PC-9 (cell line): ENCODE measurements at regions of chr3 and their contacts with region 1.

Region 1: GRCh38 chr3:119098619-119099222 is 47.2 kb upstream of the TEX55 start:
- DNase-seq: peak in 1 of 2 experiments; percentile 14
- H3K4me3 ChIP-seq: no peak overlapping the region
- H3K27ac ChIP-seq: no peak overlapping the region
- H3K4me1 ChIP-seq: no peaks in the 10 kb centered on the region
- H3K27me3 ChIP-seq: no peaks in the 10 kb centered on the region
- CTCF ChIP-seq: peak; percentile 83

Region 2: DNA sequence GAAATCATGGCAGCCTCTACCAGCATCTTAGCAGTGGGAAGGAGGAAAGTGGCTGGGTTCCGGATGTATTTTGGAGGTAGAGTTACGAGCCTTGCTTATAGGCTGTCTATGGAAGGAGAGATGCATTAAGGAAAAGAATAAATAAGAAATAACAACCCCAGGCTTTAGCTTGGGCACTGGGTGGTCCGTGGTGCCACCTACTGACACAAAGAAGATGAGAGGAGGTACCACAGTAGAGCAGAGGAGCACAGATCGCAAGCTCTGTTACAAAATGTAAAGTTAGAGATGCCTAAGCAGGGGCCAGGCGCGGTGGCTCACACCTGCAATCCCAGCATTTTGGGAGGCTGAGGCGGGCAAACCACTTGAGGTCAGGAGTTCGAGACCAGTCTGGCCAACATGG is 289.9 kb after region 1 on chr3:
- CTCF ChIA-PET with region 1: no interaction called
- POLR2A ChIA-PET with region 1: no interaction called
- intact Hi-C with region 1: loop called (anchors 2 kb)
- DNase-seq: peak in 1 of 2 experiments; percentile 59
- H3K4me3 ChIP-seq: no peak overlapping the region
- H3K27ac ChIP-seq: no peak overlapping the region
- H3K4me1 ChIP-seq: no peaks in the 10 kb centered on the region
- H3K27me3 ChIP-seq: no peaks in the 10 kb centered on the region
- CTCF ChIP-seq: peak; percentile 69

Region 3: DNA sequence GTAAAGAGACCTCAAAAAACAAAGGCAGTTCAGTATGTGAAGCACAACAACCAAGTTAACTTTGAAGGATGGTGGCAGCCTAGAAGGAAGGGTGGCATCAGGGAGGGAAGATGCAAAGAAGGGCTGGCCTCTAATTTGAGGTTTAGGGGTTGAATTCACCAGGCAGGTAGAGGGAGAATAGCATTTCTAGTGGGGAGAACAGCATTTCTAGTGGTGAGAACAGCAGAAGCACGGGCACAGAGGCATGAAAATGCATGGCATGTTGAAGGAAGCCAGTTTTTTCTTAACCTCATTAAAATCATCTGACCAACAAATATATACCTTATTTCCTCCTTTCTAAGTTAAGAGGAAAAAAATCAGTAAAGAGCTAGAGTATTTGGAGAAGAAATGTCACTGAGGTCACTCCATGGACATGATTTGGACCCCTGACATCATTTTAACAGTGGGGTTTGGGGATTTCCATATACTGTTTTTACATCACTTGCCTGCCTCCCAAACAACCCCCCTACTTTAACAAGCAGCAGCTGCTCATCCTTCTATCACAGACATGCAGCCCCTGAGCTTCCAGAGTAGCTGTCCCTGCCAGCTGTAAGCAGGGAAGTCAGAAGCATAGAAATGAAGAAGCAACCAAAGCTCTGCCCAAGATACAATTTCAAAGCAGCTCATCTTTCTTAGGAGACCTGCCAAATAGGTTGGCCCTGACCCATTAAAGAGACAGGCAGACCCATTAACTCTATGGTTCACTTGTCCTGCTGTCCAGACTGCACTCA is 564.1 kb after region 1 on chr3:
- CTCF ChIA-PET with region 1: no interaction called
- POLR2A ChIA-PET with region 1: no interaction called
- intact Hi-C with region 1: no loop called
- DNase-seq: no peak
- H3K4me3 ChIP-seq: no peak overlapping the region
- H3K27ac ChIP-seq: no peak overlapping the region
- H3K4me1 ChIP-seq: no peaks in the 10 kb centered on the region
- H3K27me3 ChIP-seq: no peaks in the 10 kb centered on the region
- CTCF ChIP-seq: no peak

Region 4: DNA sequence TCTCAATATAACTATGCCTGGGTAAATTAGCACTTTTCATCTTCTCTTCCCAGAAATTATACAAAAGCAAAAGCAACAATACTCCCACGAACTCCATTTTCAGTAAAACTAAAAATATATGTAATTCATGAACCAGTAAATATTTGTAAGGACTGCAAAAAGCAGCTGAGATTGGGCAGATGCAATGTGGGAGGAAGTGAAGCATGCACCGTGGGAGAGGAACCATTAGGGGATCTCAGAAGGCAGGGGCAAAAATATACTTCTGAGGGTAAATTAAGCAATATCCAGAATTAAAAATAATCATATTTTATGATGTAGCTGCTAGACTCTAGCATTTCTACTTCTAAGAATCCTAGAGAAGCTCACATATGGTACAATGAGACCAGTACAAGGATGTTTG is 624.3 kb after region 1 on chr3:
- CTCF ChIA-PET with region 1: no interaction called
- POLR2A ChIA-PET with region 1: no interaction called
- intact Hi-C with region 1: no loop called
- DNase-seq: no peak
- H3K4me3 ChIP-seq: no peak overlapping the region
- H3K27ac ChIP-seq: no peak overlapping the region
- H3K4me1 ChIP-seq: no peaks in the 10 kb centered on the region
- H3K27me3 ChIP-seq: no peaks in the 10 kb centered on the region
- CTCF ChIP-seq: no peak